HepG2 (cell line): ENCODE measurements at regions of chr14 and their contacts with region 1.

Region 1: DNA sequence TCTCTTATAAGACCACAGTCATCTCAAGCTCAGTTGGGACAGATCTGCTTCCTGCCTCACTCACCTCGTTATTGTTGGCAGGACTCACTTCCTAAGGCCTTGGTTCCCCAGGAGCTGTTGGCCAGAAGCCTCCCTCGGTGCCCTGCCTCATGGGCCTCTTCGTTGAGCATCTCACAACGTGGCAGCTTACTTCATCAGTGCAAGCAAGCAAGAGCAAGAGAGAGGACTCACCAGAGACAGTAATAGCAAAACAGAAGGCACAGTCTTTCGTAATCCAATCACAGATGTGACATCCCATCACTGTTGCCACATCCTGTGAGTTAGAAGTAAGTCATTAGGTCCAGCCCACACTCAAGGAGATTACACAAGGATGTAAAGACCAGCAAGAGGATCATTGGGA is 5.1 kb upstream of the NUMB start:
- DNase-seq: peak; percentile 56
- ATAC-seq: no peak
- H3K4me3 ChIP-seq: peak overlapping the region; percentile 54 to 75 (median 59)
- H3K27ac ChIP-seq: peak overlapping the region; percentile 94
- H3K4me1 ChIP-seq: peaks cover 72% of the 10 kb centered on the region
- H3K27me3 ChIP-seq: no peaks in the 10 kb centered on the region
- CTCF ChIP-seq: no peak
- EP300 ChIP-seq: no peak
- POLR2A ChIP-seq: 0 out of 4 replicates have a peak, but pooled peaks of 1 of the 2 experiments have one; percentile 23
- RAD21 ChIP-seq: no peak

Region 2: DNA sequence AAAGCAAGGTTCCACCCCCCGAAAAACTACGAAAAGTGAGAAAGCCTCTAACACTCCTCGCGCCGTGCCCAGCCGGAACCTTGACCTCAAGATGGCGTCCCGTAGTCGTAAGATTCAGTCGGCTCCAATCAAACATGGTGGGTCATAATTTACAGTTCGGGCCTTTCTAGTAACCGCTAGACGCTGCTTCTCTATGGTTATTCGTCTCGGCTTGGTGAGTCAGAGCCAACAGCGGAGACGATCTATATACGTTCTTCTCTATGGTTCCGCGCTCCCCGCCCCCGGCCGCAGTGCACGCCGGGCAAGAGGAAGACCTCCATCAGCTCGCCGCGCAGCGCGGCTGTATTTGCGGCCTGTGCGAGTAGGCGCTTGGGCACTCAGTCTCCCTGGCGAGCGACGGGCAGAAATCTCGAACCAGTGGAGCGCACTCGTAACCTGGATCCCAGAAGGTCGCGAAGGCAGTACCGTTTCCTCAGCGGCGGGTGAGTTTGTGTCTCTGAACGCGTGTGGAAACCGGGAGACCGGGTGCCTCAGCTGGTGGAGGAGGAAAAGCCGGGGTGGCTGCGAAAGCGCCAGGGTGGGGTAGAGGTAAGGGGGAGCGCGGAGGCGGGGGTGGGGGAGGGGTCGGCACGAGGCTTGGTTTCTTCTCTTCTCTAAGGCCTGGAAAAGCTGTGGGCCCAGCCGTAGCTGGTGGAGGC is 405.0 kb before region 1 on chr14 and contains the start of gene RBM25:
- CTCF ChIA-PET with region 1: no interaction called
- POLR2A ChIA-PET with region 1: interaction called, 13 read pairs
- in situ Hi-C with region 1: no loop called
- intact Hi-C with region 1: no loop called
- DNase-seq: peak; percentile 98
- ATAC-seq: peak; percentile 96
- H3K4me3 ChIP-seq: peak within 1 kb of the TSS; percentile 82 to 95 (median 93)
- H3K27ac ChIP-seq: peak within 1 kb of the TSS; percentile 99
- H3K4me1 ChIP-seq: peaks cover 31% of the 10 kb centered on the region
- H3K27me3 ChIP-seq: no peaks in the 10 kb centered on the region; a peak in 1 of 5 replicates
- CTCF ChIP-seq: peak; percentile 47
- EP300 ChIP-seq: peak; percentile 33 to 51; a peak in 3 of 4 replicates
- POLR2A ChIP-seq: peak; percentile 94 to 99
- RAD21 ChIP-seq: no peak
- total RNA-seq, gene RBM25: 52.0 and 65.9 TPM in 2 replicates

Region 3: GRCh38 chr14:73168274-73168673 is 295.1 kb before region 1 on chr14:
- CTCF ChIA-PET with region 1: no interaction called
- POLR2A ChIA-PET with region 1: no interaction called
- in situ Hi-C with region 1: loop called (anchors 10 kb)
- intact Hi-C with region 1: no loop called
- DNase-seq: no peak
- ATAC-seq: no peak
- H3K4me3 ChIP-seq: no peak overlapping the region
- H3K27ac ChIP-seq: no peak overlapping the region
- H3K4me1 ChIP-seq: no peaks in the 10 kb centered on the region
- H3K27me3 ChIP-seq: no peaks in the 10 kb centered on the region
- CTCF ChIP-seq: no peak
- EP300 ChIP-seq: no peak
- POLR2A ChIP-seq: no peak
- RAD21 ChIP-seq: no peak

Region 4: DNA sequence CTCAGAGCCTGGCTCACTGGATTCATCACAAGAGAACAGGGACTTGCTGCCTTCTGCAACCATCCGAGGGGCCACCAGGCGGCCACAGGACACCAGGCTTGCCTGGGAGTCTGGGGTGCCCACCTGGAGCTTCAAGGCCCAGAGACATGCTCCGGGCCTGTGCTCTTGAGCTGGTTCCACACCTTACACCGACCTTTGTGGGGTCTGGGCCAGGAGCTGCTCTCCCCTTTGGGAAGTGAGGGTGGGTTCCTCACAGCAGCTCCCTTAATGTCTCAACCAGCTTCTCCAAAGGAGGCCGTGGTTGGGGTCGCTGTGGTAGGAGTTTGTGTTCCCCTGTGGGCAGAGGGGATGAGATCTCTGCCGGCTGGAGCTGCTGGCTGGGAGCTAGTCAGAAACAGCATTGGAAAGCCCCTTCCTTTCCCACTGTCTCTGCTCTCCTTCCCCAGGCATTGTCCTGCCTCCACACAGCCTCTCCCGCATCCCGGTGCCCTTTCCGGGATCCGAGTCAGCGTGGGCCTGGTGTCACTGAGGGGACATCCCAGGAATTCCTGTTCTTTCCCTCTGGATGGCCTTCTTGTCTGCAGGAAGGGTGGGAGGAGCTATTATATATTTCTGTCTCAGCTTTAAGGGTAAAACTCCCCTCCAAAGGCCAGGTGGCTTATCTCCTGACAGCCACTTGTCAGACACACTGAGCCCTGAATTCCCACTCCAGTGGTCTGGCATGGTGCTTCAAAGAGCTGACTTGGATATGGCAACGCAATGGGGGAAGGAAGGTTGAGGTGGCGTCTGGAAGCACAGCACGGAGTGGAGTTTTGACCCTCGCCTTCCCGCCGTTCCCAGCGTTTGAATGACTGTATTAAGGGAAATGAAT is 231.2 kb before region 1 on chr14:
- CTCF ChIA-PET with region 1: no interaction called
- POLR2A ChIA-PET with region 1: interaction called, 14 read pairs
- in situ Hi-C with region 1: no loop called
- intact Hi-C with region 1: no loop called
- DNase-seq: peak; percentile 69
- ATAC-seq: peak; percentile 91
- H3K4me3 ChIP-seq: peak overlapping the region in 2 of 3 experiments; percentile 16 to 62; a peak in 4 of 6 replicates
- H3K27ac ChIP-seq: no peak overlapping the region
- H3K4me1 ChIP-seq: peaks cover 44% of the 10 kb centered on the region
- H3K27me3 ChIP-seq: peaks cover 9 to 44% of the 10 kb centered on the region in 2 experiments; a peak in 4 of 5 replicates
- CTCF ChIP-seq: peak; percentile 93
- EP300 ChIP-seq: no peak
- POLR2A ChIP-seq: no peak
- RAD21 ChIP-seq: peak; percentile 89

Region 5: DNA sequence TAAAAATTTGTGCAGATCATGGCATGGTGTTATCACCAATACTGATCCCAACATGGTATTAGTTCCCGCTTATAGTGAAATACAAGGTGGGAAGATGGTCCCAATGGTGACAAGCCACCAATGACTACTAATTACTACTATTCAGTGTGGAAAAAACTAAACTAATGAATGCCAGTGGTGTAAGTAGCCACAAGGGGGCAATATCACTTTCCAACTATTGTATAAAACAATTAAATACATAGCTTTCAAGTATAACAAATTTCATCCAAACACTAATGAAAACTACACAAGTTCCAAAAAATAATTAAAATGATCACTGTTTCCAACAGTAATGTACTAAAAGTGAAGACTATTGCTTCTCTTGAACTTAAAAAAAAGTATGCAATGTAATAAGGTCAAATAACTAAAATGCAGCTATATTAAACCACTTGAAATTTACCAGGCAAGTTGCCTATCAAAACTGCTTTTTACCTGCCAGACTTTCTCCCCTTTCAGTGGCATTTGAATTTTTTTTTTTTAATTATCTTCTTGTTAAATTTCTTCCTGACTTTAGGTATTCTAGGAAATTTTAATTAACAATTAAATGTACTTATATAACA is 168.1 kb before region 1 on chr14:
- CTCF ChIA-PET with region 1: no interaction called
- POLR2A ChIA-PET with region 1: interaction called, 39 read pairs
- in situ Hi-C with region 1: loop called (anchors 5 kb)
- intact Hi-C with region 1: loop called (anchors 5 kb)
- DNase-seq: peak; percentile 27
- ATAC-seq: no peak
- H3K4me3 ChIP-seq: no peak overlapping the region
- H3K27ac ChIP-seq: no peak overlapping the region
- H3K4me1 ChIP-seq: peaks cover 41% of the 10 kb centered on the region
- H3K27me3 ChIP-seq: no peaks in the 10 kb centered on the region
- CTCF ChIP-seq: peak; percentile 62
- EP300 ChIP-seq: no peak
- POLR2A ChIP-seq: no peak
- RAD21 ChIP-seq: peak; percentile 41; the same call in 1 of the 2 replicates

Region 6: DNA sequence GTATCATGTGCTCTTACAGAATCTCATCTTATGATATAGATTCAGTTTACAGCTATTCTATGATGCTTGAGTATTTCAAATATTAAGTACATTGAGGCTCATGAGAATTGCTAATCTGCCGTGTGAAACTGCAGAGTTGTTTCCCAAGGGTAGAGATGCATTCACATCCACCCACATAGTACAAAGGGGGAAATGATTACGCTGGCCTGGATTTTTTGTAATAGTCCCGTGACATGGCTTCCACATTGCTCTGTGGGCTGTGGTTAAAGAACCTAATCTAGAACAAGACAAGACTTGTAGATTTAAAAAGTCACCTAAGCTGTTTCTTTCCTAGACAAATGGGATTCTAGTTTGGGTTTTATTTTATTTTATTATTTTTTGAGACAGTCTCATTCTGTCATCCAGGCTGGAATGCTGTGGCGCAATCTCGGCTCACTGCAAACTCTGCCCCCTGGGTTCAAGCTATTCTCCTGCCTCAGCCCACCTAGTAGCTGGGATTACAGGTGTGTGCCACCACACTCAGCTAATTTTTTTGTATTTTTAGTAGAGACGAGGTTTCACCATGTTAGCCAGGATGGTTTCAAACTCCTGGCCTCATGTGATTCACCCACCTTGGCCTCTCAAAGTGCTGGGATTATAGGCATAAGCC is 14.3 kb after region 1 on chr14:
- CTCF ChIA-PET with region 1: no interaction called
- POLR2A ChIA-PET with region 1: interaction called, 12 read pairs
- in situ Hi-C with region 1: no loop called
- intact Hi-C with region 1: no loop called
- DNase-seq: no peak
- ATAC-seq: no peak
- H3K4me3 ChIP-seq: no peak overlapping the region
- H3K27ac ChIP-seq: peak overlapping the region; percentile 66
- H3K4me1 ChIP-seq: peaks cover 24% of the 10 kb centered on the region
- H3K27me3 ChIP-seq: no peaks in the 10 kb centered on the region
- CTCF ChIP-seq: no peak
- EP300 ChIP-seq: no peak
- POLR2A ChIP-seq: no peak
- RAD21 ChIP-seq: no peak

Region 7: GRCh38 chr14:73491256-73492042 is 28.0 kb after region 1 on chr14:
- CTCF ChIA-PET with region 1: no interaction called
- POLR2A ChIA-PET with region 1: interaction called, 21 read pairs
- in situ Hi-C with region 1: no loop called
- intact Hi-C with region 1: no loop called
- DNase-seq: peak; percentile 54
- ATAC-seq: peak; percentile 88
- H3K4me3 ChIP-seq: peak overlapping the region; percentile 58 to 84 (median 70)
- H3K27ac ChIP-seq: peak overlapping the region; percentile 85
- H3K4me1 ChIP-seq: peaks cover 39% of the 10 kb centered on the region
- H3K27me3 ChIP-seq: no peaks in the 10 kb centered on the region
- CTCF ChIP-seq: no peak
- EP300 ChIP-seq: no peak
- POLR2A ChIP-seq: peak in 1 of 2 experiments; percentile 31; a peak in 2 of 4 replicates
- RAD21 ChIP-seq: peak; percentile 31